Posterior vena cava (tissue), 2 donors: ENCODE measurements at regions of chr7 and their contacts with region 1.

Region 1: GRCh38 chr7:134021836-134022235 is 105.3 kb upstream of the LRGUK start:
- DNase-seq: no peak

Region 2: DNA sequence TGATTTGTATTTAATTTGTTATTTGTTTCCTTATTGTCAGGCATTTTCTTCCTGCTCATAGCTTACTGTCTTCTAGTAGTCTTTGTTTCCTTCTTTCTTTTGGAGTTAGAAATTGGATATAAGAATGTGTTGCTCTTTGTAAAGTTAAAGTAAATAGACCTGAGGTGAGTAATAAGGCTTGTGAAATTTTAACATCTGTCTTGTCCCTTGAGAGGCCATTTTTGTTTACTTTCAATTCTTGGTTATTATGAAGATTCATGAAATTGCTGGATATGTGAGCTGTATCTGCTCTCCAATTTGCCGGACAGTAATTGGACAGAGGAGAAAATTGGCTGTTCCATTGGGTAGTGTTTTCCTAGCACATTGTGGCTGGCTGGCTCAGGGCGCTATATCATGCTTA is 508.2 kb before region 1 on chr7:
- intact Hi-C with region 1: no loop called
- DNase-seq: no peak

Region 3: DNA sequence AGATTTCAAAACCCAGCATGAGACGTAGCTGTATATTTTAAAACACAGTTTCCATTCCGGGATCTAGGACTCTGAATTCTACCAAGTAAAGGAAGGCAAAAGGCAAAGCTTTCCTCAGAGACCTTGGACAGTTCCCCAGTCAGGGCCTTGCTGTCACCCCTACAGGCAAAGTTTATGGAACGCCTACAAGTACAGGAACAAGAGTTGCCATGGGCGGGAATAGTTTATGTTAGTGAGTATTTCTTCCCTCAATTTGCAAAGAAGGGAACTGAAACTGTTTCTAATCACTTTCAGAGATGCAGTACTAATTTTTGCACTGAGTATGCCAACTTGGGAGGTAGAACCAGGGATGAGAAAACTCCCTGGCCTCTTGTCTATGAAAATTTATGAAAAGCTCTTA is 37.1 kb after region 1 on chr7:
- intact Hi-C with region 1: loop called in 1 of 2 experiments (anchors 2 kb)
- DNase-seq: no peak